ENCODE measurements at regions of chr6 and their contacts with region 1.

Region 1: DNA sequence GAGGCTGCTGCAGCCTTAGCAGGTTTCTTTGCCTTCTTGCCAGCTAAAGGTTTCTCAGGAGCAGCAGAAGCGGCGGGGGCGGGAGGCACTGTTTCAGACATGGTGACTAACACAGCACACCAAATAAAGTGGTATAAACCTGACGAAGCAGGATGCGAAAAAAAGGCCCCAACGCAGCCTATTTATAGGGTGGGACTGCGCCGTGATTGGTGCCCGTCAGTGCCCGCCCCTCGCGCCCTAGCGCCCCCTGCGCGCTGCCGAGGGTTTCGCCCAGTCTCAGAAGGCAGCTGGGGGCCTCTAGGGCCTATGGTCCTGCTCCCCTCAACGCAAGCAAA is 55.0 kb downstream of the TRIM38 start:
- DNase-seq: peak; percentile 80
- H3K4me3 Mint-ChIP-seq: peak overlapping the region; percentile 84
- H3K27ac Mint-ChIP-seq: peak overlapping the region; percentile 87
- H3K4me1 Mint-ChIP-seq: no peaks in the 10 kb centered on the region
- H3K27me3 Mint-ChIP-seq: no peaks in the 10 kb centered on the region
- CTCF ChIP-seq: peak; percentile 23

Region 2: GRCh38 chr6:25962149-25963127 is 55.2 kb before region 1 on chr6 and contains the start of gene TRIM38:
- CTCF ChIA-PET with region 1: no interaction called
- intact Hi-C with region 1: no loop called
- DNase-seq: peak; percentile 78
- H3K4me3 Mint-ChIP-seq: peak within 1 kb of the TSS; percentile 95
- H3K27ac Mint-ChIP-seq: peak within 1 kb of the TSS; percentile 100
- H3K4me1 Mint-ChIP-seq: peaks cover 44% of the 10 kb centered on the region
- H3K27me3 Mint-ChIP-seq: no peaks in the 10 kb centered on the region
- CTCF ChIP-seq: no peak
- total RNA-seq, gene TRIM38: 20.6 and 26.1 TPM in 2 replicates

Region 3: DNA sequence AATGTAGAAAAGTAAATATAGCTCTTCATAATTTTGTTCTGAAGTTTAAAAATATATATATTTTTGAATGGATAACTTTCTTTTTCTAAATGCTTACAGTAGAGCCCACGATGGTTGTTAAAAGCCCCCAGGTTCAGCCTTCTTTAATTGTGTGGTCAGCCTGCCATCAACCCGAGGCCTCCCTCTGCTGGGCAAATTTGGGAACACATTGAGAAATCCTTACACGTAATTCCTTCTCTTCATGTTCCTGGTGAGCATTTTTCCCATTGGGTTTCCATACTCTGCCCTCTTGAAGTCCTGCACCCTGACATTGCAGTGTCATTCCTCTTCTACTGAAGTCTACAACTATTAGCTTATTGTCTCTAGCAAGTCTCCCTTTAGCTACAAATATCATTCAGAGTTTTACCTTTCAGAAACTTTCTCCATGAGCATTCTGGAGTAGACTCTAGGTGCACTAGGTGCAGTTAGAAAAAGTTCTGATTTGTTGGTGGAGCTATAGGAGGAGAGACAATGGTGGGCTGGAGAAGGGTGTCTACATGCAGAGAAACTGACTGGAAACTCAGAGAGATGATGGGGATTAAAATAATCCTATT is 14.4 kb before region 1 on chr6:
- CTCF ChIA-PET with region 1: interaction called, 13 read pairs
- intact Hi-C with region 1: no loop called
- DNase-seq: peak; percentile 80
- H3K4me3 Mint-ChIP-seq: no peak overlapping the region
- H3K27ac Mint-ChIP-seq: no peak overlapping the region
- H3K4me1 Mint-ChIP-seq: peaks cover 3% of the 10 kb centered on the region
- H3K27me3 Mint-ChIP-seq: no peaks in the 10 kb centered on the region
- CTCF ChIP-seq: peak; percentile 71

Measured in Calu3 (cell line).